Endothelial cell of umbilical vein (primary cell): ENCODE measurements at regions of chr5 and their contacts with region 1.

Region 1: DNA sequence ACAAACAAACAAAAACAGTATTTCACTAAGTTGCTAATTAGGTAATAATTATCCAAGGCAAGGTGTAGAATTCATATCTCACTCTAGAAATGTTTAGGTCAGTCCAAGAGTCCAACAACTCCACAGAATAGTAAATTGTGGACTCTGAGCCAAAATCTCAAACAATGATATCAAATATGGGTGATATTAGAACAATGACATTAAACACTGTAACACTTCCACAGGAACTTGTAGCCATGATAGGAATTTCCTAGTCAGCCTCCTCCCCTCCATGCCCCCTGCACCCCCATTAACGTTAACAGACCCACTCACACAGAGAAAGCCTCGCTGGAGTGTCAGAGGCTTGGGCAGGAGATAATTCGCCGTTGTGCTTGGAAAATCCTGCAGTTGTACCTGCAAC is 305.0 kb upstream of the PIK3R1 start:
- DNase-seq: peak; percentile 60
- H3K4me3 ChIP-seq: no peak overlapping the region
- H3K27ac ChIP-seq: no peak overlapping the region
- H3K4me1 ChIP-seq: peaks cover 17% of the 10 kb centered on the region
- H3K27me3 ChIP-seq: no peaks in the 10 kb centered on the region
- CTCF ChIP-seq: no peak
- POLR2A ChIP-seq: no peak

Region 2: GRCh38 chr5:67395790-67396418 is 514.6 kb before region 1 on chr5:
- CTCF ChIA-PET with region 1: no interaction called
- POLR2A ChIA-PET with region 1: no interaction called
- dilution Hi-C with region 1: no loop called
- intact Hi-C with region 1: loop called (anchors 10 kb)
- DNase-seq: no peak
- H3K4me3 ChIP-seq: no peak overlapping the region
- H3K27ac ChIP-seq: no peak overlapping the region
- H3K4me1 ChIP-seq: peaks cover 19% of the 10 kb centered on the region
- H3K27me3 ChIP-seq: no peaks in the 10 kb centered on the region
- CTCF ChIP-seq: no peak
- POLR2A ChIP-seq: no peak

Region 3: GRCh38 chr5:67998709-67999261 is 88.2 kb after region 1 on chr5:
- CTCF ChIA-PET with region 1: no interaction called
- POLR2A ChIA-PET with region 1: no interaction called
- dilution Hi-C with region 1: no loop called
- intact Hi-C with region 1: loop called (anchors 2 kb)
- DNase-seq: peak; percentile 82
- H3K4me3 ChIP-seq: no peak overlapping the region
- H3K27ac ChIP-seq: peak overlapping the region; percentile 85
- H3K4me1 ChIP-seq: peaks cover 14% of the 10 kb centered on the region
- H3K27me3 ChIP-seq: no peaks in the 10 kb centered on the region
- CTCF ChIP-seq: no peak
- POLR2A ChIP-seq: peak; percentile 23